T-cell (primary cell): ENCODE measurements at regions of chr6 and their contacts with region 1.

Region 1: GRCh38 chr6:16819752-16820151 is 58.5 kb upstream of the ATXN1 start:
- DNase-seq: peak in 1 of 35 experiments; percentile 32
- ATAC-seq: no peak
- H3K4me3 ChIP-seq: no peak overlapping the region
- H3K4me3 Mint-ChIP-seq: no peak overlapping the region
- H3K27ac ChIP-seq: no peak overlapping the region
- H3K27ac Mint-ChIP-seq: no peak overlapping the region
- H3K4me1 ChIP-seq: no peaks in the 10 kb centered on the region
- H3K4me1 Mint-ChIP-seq: no peaks in the 10 kb centered on the region
- H3K27me3 ChIP-seq: peaks cover 0 to 2% of the 10 kb centered on the region in 2 experiments
- H3K27me3 Mint-ChIP-seq: peaks cover 5 to 7% of the 10 kb centered on the region in 2 donors

Region 2: DNA sequence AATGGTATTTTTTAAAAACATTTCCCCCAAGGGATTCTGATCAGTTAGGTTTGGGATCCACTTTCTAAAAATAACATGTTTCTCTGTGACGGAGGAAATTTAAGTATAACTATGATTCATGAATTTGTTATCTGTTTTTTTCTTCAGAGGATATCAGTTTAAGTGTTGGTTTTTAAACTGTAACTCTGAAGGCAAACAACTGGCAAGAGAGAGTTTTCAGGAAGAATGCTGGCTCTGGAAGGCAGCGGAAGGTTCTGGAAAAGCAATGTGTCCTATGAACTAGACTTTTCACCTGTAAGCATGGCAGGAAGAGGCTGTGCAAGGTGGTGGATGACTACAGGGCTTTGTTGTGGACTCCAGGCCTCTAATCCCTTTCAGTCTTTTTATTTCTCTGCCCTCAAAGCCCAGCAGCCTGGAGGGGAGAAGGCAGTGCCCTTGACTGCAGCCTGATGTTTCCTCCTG is 428.3 kb before region 1 on chr6:
- CTCF ChIA-PET with region 1: no interaction called
- POLR2A ChIA-PET with region 1: interaction called in 1 of 2 experiments, 15 read pairs
- DNase-seq: no peak
- ATAC-seq: no peak
- H3K4me3 ChIP-seq: no peak overlapping the region
- H3K4me3 Mint-ChIP-seq: no peak overlapping the region
- H3K27ac ChIP-seq: no peak overlapping the region
- H3K27ac Mint-ChIP-seq: peak overlapping the region in 1 of 2 donors; percentile 6
- H3K4me1 ChIP-seq: no peaks in the 10 kb centered on the region
- H3K4me1 Mint-ChIP-seq: peaks cover 0 to 2% (median 0%) of the 10 kb centered on the region in 3 donors
- H3K27me3 ChIP-seq: no peaks in the 10 kb centered on the region
- H3K27me3 Mint-ChIP-seq: no peaks in the 10 kb centered on the region

Region 3: DNA sequence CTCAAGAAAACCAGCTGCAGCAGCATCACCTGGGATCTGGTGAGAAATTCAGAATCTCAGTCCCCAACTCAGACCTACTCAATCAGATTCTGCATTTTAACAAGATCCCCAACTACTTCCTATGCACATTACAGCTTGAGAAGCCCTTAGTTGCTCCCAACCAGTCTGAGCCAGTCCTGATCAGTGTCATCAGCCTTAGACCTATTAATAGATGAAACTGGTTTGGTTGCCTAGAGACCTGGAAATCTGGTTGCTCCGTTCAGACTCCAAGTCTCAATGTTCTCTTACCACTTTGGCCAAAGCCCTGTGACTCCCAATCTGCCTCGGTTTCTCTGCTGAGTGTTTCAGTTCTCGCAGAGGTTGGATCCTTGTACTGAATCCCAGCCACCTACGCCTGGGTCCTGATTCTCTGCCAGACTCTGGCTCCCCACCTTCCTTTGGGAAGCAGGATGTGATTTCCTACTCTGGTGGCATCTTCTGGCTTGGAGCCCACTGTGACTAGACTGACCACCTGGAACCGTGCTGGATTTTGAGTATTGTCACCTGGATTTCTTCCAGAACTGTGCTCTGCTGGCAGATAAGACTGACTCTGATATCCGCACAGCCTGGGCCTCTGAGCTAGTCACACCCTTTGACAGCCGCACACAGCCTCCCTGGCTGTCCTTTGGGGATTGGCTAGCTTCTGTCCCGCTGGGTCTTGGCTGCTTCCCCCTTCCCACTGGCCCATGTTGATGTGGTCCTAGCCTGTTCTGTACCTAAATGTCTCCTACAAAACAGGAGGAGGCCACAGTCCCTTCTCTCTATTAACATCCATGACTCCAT is 38.2 kb before region 1 on chr6:
- CTCF ChIA-PET with region 1: no interaction called
- POLR2A ChIA-PET with region 1: no interaction called
- DNase-seq: no peak
- ATAC-seq: no peak
- H3K4me3 ChIP-seq: no peak overlapping the region
- H3K4me3 Mint-ChIP-seq: no peak overlapping the region
- H3K27ac ChIP-seq: no peak overlapping the region
- H3K27ac Mint-ChIP-seq: no peak overlapping the region
- H3K4me1 ChIP-seq: no peaks in the 10 kb centered on the region
- H3K4me1 Mint-ChIP-seq: peaks cover 0 to 6% (median 0%) of the 10 kb centered on the region in 3 donors
- H3K27me3 ChIP-seq: no peaks in the 10 kb centered on the region
- H3K27me3 Mint-ChIP-seq: peaks cover 3 to 4% of the 10 kb centered on the region in 2 donors